H1 (cell line): ENCODE measurements at regions of chr17 and their contacts with region 1.

Region 1: GRCh38 chr17:50707289-50708049 is at the start of gene ANKRD40:
- DNase-seq: peak in 1 of 2 experiments; percentile 86
- H3K4me3 ChIP-seq: peak within 1 kb of the TSS; percentile 46 to 85 (median 76)
- H3K27ac ChIP-seq: peak within 1 kb of the TSS; percentile 64
- H3K4me1 ChIP-seq: peaks cover 0 to 5% (median 4%) of the 10 kb centered on the region in 4 experiments; a peak in 4 of 7 replicates
- H3K27me3 ChIP-seq: no peaks in the 10 kb centered on the region
- CTCF ChIP-seq: no peak
- EP300 ChIP-seq: no peak; a peak in 1 of 3 replicates
- POLR2A ChIP-seq: peak; percentile 33 to 57; a peak in 2 of 3 replicates
- RAD21 ChIP-seq: no peak
- total RNA-seq, gene ANKRD40: 50.1 and 54.3 TPM in 2 replicates

Region 2: DNA sequence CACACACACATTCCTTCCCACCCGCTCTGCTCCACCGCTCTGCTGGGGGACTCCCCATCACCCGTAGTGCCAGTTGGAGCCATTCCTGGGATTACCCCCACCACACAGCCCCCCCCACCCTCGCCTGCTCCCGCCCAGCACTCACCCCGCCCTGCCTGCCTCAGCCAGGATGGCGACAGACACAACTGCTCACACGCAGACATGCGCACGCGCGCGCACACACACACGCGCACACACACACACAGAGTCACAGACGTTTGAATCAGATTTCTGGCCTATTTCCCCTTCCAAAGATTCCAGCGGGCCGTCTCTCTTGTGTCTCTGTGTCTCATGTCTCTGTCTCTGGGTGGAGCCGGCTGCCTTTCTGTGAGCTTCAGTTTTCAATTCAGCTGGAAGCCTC is 142.6 kb before region 1 on chr17:
- CTCF ChIA-PET with region 1: no interaction called
- POLR2A ChIA-PET with region 1: no interaction called
- DNase-seq: no peak
- H3K4me3 ChIP-seq: peak overlapping the region in 2 of 4 experiments; percentile 0 to 44; a peak in 2 of 8 replicates
- H3K27ac ChIP-seq: no peak overlapping the region
- H3K4me1 ChIP-seq: peaks cover 0 to 28% (median 18%) of the 10 kb centered on the region in 4 experiments; a peak in 6 of 7 replicates
- H3K27me3 ChIP-seq: peaks cover 27 to 58% (median 54%) of the 10 kb centered on the region in 4 experiments
- CTCF ChIP-seq: no peak
- EP300 ChIP-seq: no peak
- POLR2A ChIP-seq: no peak
- RAD21 ChIP-seq: no peak

Region 3: GRCh38 chr17:50719144-50719923 is 11.9 kb after region 1 on chr17 and contains the start of gene LUC7L3:
- CTCF ChIA-PET with region 1: no interaction called
- POLR2A ChIA-PET with region 1: interaction called, 34 read pairs
- DNase-seq: peak; percentile 73 to 97
- H3K4me3 ChIP-seq: peak within 1 kb of the TSS; percentile 60 to 95 (median 94)
- H3K27ac ChIP-seq: peak within 1 kb of the TSS; percentile 99
- H3K4me1 ChIP-seq: peaks cover 0 to 8% (median 2%) of the 10 kb centered on the region in 4 experiments; a peak in 3 of 7 replicates
- H3K27me3 ChIP-seq: no peaks in the 10 kb centered on the region
- CTCF ChIP-seq: peak in 1 of 3 experiments; percentile 14; a peak in 1 of 4 replicates
- EP300 ChIP-seq: 0 out of 3 replicates have a peak, but pooled peaks of 1 of the 2 experiments have one; percentile 40
- POLR2A ChIP-seq: peak; percentile 94 to 98
- RAD21 ChIP-seq: no peak
- total RNA-seq, gene LUC7L3: 126 and 128 TPM in 2 replicates